Adrenal gland (tissue), 19 donors: ENCODE measurements at regions of chr12 and their contacts with region 1.

Region 1: DNA sequence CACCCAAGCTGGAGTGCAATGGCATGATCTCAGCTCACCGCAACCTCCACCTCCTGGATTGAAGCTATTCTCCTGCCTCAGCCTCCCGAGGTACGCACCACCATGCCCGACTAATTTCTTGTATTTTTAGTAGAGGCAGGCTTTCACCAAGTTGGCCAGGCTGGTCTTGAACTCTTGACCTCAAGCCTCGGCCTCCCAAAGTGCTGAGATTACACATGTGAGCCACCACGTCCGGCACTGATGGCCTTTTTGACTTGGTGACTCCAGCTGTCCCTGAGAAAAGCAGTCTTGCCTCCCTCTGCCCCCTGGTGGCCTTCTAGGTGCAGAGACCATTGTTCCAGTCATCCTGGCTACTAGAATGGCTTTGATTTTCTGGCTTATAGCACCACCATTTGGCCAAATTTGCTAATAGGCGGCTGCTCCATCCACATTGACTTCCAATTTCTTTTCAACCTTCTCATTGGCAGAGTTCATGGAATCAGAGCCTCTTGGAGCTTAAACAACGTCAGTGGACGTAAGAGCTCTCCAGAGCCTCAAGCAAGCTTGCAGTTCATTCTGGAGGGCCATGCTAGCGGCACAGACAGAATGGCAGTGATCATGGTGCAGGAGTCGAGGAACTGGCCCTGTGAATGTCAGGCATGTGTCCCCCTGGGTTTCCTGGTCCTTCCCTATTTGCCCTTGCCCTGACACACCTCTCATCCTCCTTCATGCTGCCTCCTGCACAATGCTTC is 25.4 kb upstream of the EIF4B start:
- DNase-seq: peak; percentile 91 to 98 (median 94)
- H3K4me3 ChIP-seq: no peak overlapping the region
- H3K27ac ChIP-seq: no peak overlapping the region
- H3K4me1 ChIP-seq: no peaks in the 10 kb centered on the region
- H3K27me3 ChIP-seq: no peaks in the 10 kb centered on the region
- CTCF ChIP-seq: peak; percentile 92 to 100 (median 100)
- POLR2A ChIP-seq: no peak

Region 2: GRCh38 chr12:52139552-52140062 is 841.3 kb before region 1 on chr12:
- intact Hi-C with region 1: loop called in 1 of 2 experiments (anchors 10 kb)
- DNase-seq: peak in 1 of 7 donors; percentile 47
- H3K4me3 ChIP-seq: no peak overlapping the region
- H3K27ac ChIP-seq: no peak overlapping the region
- H3K4me1 ChIP-seq: no peaks in the 10 kb centered on the region
- H3K27me3 ChIP-seq: no peaks in the 10 kb centered on the region
- CTCF ChIP-seq: peak; percentile 36 to 60 (median 54)
- POLR2A ChIP-seq: no peak

Region 3: GRCh38 chr12:52372216-52373154 is 608.4 kb before region 1 on chr12:
- intact Hi-C with region 1: loop called in 1 of 2 experiments (anchors 10 kb)
- DNase-seq: peak; percentile 82 to 94 (median 87)
- H3K4me3 ChIP-seq: no peak overlapping the region
- H3K27ac ChIP-seq: no peak overlapping the region
- H3K4me1 ChIP-seq: no peaks in the 10 kb centered on the region
- H3K27me3 ChIP-seq: no peaks in the 10 kb centered on the region
- CTCF ChIP-seq: peak; percentile 71 to 89 (median 85)
- POLR2A ChIP-seq: no peak

Region 4: DNA sequence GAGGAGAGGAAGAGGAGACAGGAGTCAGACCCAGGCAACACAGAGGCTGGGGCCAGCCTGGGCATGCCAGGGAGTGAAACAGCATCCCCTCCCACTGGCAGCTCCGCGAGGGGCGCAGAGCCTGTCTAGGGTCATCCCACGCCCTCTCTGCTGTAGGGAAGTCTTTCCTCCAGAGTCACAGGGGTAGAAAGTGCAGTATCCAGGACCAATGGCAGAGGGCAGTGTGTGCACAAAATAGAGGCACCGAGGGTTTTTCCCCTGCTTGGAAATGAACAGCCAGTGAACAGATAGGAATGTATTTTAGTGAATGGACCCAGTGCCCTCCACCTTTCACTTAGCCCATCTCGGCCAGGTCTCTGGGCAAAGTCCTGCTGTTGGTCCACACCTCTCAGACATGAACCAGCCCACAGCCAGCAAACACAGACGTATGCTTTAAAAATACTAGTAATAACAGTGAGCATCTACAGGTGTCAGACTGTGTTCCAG is 397.8 kb before region 1 on chr12:
- intact Hi-C with region 1: loop called in 1 of 2 experiments (anchors 5 kb)
- DNase-seq: peak; percentile 48 to 83 (median 68)
- H3K4me3 ChIP-seq: no peak overlapping the region
- H3K27ac ChIP-seq: no peak overlapping the region
- H3K4me1 ChIP-seq: no peaks in the 10 kb centered on the region
- H3K27me3 ChIP-seq: no peaks in the 10 kb centered on the region
- CTCF ChIP-seq: peak; percentile 69 to 77 (median 74)
- POLR2A ChIP-seq: no peak

Region 5: DNA sequence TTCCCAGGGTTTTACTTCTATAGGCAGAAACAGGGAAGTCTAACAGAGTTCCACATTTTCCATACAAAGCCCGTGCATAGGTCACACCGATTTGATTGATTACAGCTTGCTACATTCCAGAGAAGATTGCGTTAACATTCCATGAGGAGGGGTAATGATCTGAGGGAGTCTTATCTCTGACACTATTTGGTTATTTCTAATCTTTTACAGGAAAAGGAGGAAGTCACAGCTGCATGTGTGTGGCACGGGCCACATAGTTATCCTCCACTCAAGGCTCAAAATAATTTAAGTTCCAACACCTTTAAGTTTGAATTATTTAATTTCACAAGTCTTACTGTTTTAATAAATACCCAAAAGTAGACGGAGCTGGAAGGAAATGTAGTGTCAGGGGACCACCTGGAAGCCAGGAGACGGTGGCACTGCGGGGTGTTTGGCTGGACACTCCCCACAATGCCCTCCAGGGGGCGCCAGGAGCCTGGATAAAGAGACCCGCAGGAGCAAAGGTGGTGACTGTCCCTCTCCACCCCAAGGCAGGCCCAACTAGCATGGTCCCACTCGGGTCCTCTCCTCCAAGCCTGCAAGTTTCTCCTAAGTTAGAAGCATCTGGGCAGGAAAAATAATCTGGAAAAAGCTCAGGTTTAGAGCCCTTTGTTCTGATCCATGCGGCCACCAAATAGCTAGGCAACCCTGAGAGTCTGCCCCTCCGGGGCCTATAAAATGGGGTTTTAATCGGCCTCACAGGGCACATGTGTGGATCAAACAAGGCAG is 96.1 kb before region 1 on chr12:
- intact Hi-C with region 1: loop called (anchors 2 to 5 kb)
- DNase-seq: peak; percentile 65 to 89 (median 82)
- H3K4me3 ChIP-seq: no peak overlapping the region
- H3K27ac ChIP-seq: no peak overlapping the region
- H3K4me1 ChIP-seq: no peaks in the 10 kb centered on the region
- H3K27me3 ChIP-seq: no peaks in the 10 kb centered on the region
- CTCF ChIP-seq: peak; percentile 81 to 96 (median 94)
- POLR2A ChIP-seq: no peak

Region 6: DNA sequence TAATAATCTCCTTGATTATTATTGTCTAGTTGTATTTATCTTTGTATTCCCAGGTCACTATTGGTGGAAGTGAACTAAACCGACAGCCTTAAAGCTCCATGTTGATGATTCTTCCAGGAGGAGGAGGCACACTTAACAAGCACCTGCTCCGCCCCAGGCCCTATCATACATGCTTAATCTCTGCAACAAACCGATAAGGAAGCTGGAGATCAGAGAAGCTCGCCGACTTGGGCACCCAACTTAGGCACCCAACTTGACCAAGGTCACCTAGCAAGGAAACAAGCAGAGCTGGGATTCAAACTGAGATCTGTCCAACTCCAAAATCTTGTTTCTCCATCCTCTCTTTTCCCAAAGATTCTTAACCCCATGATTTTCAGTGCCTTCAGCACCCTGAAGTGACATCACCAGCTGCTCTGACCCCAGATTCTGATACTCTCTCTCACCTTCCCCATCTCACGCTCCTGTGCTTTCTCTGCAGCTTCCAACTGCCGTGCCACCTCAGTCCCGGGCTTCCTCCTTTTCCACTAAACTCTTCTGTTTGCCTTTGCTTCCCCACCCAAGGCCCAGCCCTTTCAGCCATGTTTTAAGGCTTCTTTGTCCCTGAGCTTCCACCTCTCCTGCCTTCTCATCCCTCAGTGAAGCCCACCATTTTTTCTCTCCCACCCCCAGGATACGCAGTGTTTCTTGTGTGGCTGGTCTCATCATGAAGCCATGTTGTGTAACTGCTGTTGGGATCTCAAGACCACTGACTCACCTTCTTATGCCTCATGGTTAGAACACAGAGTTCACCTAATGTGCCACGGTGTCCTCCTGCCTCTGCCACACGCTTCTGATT is 38.6 kb before region 1 on chr12:
- intact Hi-C with region 1: no loop called
- DNase-seq: no peak
- H3K4me3 ChIP-seq: no peak overlapping the region
- H3K27ac ChIP-seq: no peak overlapping the region
- H3K4me1 ChIP-seq: no peaks in the 10 kb centered on the region
- H3K27me3 ChIP-seq: no peaks in the 10 kb centered on the region
- CTCF ChIP-seq: no peak
- POLR2A ChIP-seq: no peak

Region 7: GRCh38 chr12:53054112-53054833 is 73.4 kb after region 1 on chr12:
- intact Hi-C with region 1: no loop called
- DNase-seq: peak; percentile 95 to 98 (median 97)
- H3K4me3 ChIP-seq: peak overlapping the region in 3 of 4 donors; percentile 23 to 49 (median 46)
- H3K27ac ChIP-seq: peak overlapping the region; percentile 87 to 99 (median 97)
- H3K4me1 ChIP-seq: peaks cover 56 to 60% of the 10 kb centered on the region in 2 donors
- H3K27me3 ChIP-seq: no peaks in the 10 kb centered on the region
- CTCF ChIP-seq: no peak
- POLR2A ChIP-seq: peak; percentile 59 to 67

Region 8: DNA sequence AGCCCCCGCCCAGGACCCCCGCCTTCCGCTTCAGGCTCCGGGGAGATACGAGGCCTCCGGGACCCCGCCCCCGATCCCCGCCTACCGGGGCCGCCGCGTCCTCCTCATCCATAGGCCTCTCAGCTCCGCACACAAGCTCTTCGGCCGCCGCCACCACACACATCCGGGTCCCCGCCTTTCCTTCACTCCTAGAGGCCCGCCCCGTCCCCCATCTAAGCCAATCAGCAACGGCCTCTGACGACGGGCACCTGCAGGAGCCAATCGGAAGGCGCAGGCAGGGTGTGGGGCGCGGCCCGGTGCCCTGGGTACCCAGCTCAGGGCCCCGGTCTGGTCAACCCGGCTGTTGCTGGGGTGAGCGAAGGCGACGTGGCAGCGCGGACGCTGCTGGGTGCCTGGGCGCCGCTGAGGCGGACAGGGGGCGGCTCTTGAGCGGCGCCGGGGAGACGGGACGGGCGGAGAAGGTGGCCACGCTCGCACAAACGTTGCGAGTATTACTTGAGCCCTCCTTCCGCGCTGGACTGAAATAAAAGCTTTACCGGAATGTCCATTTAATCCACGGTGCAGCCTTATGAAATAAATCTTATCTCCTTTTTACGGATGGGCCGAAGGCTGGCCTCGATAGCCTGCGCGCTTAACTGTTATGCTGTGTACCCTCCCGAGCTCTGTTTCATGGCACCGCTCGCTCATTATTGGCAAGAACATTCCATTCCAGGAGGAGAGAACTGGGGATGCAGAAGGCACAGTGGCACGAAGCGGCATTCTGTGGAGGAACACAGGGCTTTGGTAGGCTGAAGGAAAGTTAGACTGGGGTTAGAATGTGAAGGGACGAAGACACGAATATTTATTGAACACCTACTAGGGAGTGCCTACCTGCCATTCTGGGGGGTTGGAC is 98.6 kb after region 1 on chr12 and contains the start of gene SPRYD3:
- intact Hi-C with region 1: no loop called
- DNase-seq: peak; percentile 96 to 99 (median 97)
- H3K4me3 ChIP-seq: peak within 1 kb of the TSS; percentile 33 to 80 (median 44)
- H3K27ac ChIP-seq: peak within 1 kb of the TSS; percentile 67 to 94 (median 85)
- H3K4me1 ChIP-seq: peaks cover 9 to 30% of the 10 kb centered on the region in 2 donors
- H3K27me3 ChIP-seq: no peaks in the 10 kb centered on the region
- CTCF ChIP-seq: no peak
- POLR2A ChIP-seq: peak; percentile 86 to 90
- total RNA-seq, gene SPRYD3: 28.9 to 74.6 (median 45.0) TPM